CD8-positive, alpha-beta T cell (primary cell): ENCODE measurements at regions of chr16 and their contacts with region 1.

Region 1: DNA sequence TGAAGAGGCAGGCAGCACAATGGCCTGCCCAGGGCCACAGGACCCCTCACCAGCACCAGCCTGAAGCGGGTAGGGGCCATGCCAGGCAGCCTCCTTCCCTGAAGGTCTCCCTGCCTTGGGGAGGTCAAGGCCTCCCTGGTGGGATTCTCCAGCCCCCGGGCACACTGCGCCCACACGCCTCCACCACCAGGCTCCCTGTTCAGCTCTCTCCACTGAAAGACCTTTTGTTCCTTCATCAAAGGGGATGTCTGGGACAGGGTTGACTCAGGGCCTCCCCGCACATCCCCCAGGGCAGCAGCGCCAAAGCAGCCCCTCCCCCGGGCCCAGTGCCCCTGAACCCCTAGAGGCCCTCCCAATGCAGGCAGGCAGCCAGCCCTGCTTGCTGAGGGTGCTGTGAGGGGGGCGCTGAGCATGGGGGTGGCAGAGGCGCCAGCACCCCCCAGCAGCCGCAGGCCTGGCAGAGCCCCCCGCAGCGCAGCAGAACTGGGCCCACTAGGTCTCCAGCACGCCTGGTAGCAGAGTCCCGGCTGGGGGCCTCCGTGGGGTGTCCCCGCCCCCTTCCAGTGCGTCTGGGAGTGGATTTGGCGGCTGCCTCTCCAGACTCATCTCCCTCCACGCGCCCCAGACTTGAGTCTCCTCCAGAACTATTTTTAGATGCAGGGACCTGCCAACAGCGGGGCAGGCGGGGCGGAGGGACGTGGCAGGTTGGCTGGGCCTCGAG is 13.1 kb downstream of the BCAR1 start:
- DNase-seq: no peak
- ATAC-seq: no peak
- H3K4me3 ChIP-seq: no peak overlapping the region
- H3K4me3 Mint-ChIP-seq: no peak overlapping the region
- H3K27ac ChIP-seq: no peak overlapping the region
- H3K27ac Mint-ChIP-seq: no peak overlapping the region
- H3K4me1 ChIP-seq: no peaks in the 10 kb centered on the region
- H3K4me1 Mint-ChIP-seq: peaks cover 2% of the 10 kb centered on the region
- H3K27me3 ChIP-seq: no peaks in the 10 kb centered on the region
- H3K27me3 Mint-ChIP-seq: no peaks in the 10 kb centered on the region
- CTCF ChIP-seq: no peak

Region 2: GRCh38 chr16:75181630-75182029 is 56.7 kb before region 1 on chr16:
- CTCF ChIA-PET with region 1: no interaction called
- POLR2A ChIA-PET with region 1: no interaction called
- intact Hi-C with region 1: no loop called
- DNase-seq: no peak
- ATAC-seq: no peak
- H3K4me3 ChIP-seq: no peak overlapping the region
- H3K4me3 Mint-ChIP-seq: no peak overlapping the region
- H3K27ac ChIP-seq: no peak overlapping the region
- H3K27ac Mint-ChIP-seq: no peak overlapping the region
- H3K4me1 ChIP-seq: no peaks in the 10 kb centered on the region
- H3K4me1 Mint-ChIP-seq: no peaks in the 10 kb centered on the region
- H3K27me3 ChIP-seq: no peaks in the 10 kb centered on the region
- H3K27me3 Mint-ChIP-seq: peaks cover 5% of the 10 kb centered on the region
- CTCF ChIP-seq: no peak

Region 3: DNA sequence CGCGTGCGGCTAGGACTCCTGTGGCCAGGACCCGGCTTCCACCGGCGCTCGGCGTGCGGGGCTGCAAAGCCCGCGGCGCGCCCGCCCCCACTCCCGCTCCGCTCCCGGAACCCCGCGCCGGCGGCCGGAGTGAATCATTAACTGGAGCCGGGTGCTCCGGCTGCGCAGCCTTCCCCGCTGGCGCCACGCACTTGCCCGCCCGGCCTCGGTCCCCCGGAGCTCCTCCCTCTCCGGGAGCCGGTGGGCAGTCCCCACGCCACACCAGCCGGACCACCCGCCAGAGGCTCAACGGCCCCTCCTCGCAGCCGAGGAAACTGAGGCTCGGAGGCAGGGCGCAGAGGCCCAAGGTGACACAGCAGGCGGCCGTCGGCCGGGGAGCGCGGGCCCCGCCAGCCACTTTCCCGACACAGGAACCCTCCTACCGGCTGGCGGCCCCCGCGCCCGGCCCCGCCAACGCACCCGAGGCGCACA is 12.6 kb after region 1 on chr16:
- CTCF ChIA-PET with region 1: interaction called, 14 read pairs
- POLR2A ChIA-PET with region 1: no interaction called
- intact Hi-C with region 1: no loop called
- DNase-seq: no peak
- ATAC-seq: no peak
- H3K4me3 ChIP-seq: no peak overlapping the region
- H3K4me3 Mint-ChIP-seq: no peak overlapping the region
- H3K27ac ChIP-seq: no peak overlapping the region
- H3K27ac Mint-ChIP-seq: no peak overlapping the region
- H3K4me1 ChIP-seq: peaks cover 6% of the 10 kb centered on the region
- H3K4me1 Mint-ChIP-seq: peaks cover 10% of the 10 kb centered on the region
- H3K27me3 ChIP-seq: peaks cover 13 to 24% of the 10 kb centered on the region in 2 experiments
- H3K27me3 Mint-ChIP-seq: peaks cover 44% of the 10 kb centered on the region
- CTCF ChIP-seq: no peak

Region 4: GRCh38 chr16:75385507-75386152 is 147.3 kb after region 1 on chr16:
- CTCF ChIA-PET with region 1: interaction called, 214 read pairs
- POLR2A ChIA-PET with region 1: interaction called, 11 read pairs
- intact Hi-C with region 1: loop called in 1 of 2 experiments (anchors 1 kb)
- DNase-seq: peak in 3 of 9 experiments; percentile 5 to 79 (median 70)
- ATAC-seq: peak; percentile 26
- H3K4me3 ChIP-seq: no peak overlapping the region
- H3K4me3 Mint-ChIP-seq: no peak overlapping the region
- H3K27ac ChIP-seq: no peak overlapping the region
- H3K27ac Mint-ChIP-seq: no peak overlapping the region
- H3K4me1 ChIP-seq: peaks cover 4% of the 10 kb centered on the region
- H3K4me1 Mint-ChIP-seq: peaks cover 16% of the 10 kb centered on the region
- H3K27me3 ChIP-seq: no peaks in the 10 kb centered on the region
- H3K27me3 Mint-ChIP-seq: no peaks in the 10 kb centered on the region
- CTCF ChIP-seq: peak; percentile 75

Region 5: GRCh38 chr16:75392911-75393310 is 154.6 kb after region 1 on chr16:
- CTCF ChIA-PET with region 1: interaction called, 214 read pairs
- POLR2A ChIA-PET with region 1: no interaction called
- intact Hi-C with region 1: no loop called
- DNase-seq: no peak
- ATAC-seq: no peak
- H3K4me3 ChIP-seq: no peak overlapping the region
- H3K4me3 Mint-ChIP-seq: no peak overlapping the region
- H3K27ac ChIP-seq: no peak overlapping the region
- H3K27ac Mint-ChIP-seq: no peak overlapping the region
- H3K4me1 ChIP-seq: no peaks in the 10 kb centered on the region
- H3K4me1 Mint-ChIP-seq: no peaks in the 10 kb centered on the region
- H3K27me3 ChIP-seq: no peaks in the 10 kb centered on the region
- H3K27me3 Mint-ChIP-seq: no peaks in the 10 kb centered on the region
- CTCF ChIP-seq: no peak

Region 6: GRCh38 chr16:75402821-75403475 is 164.7 kb after region 1 on chr16:
- CTCF ChIA-PET with region 1: interaction called, 47 read pairs
- POLR2A ChIA-PET with region 1: no interaction called
- intact Hi-C with region 1: loop called (anchors 1 to 5 kb)
- DNase-seq: peak in 2 of 9 experiments; percentile 41 to 50
- ATAC-seq: peak; percentile 44
- H3K4me3 ChIP-seq: no peak overlapping the region
- H3K4me3 Mint-ChIP-seq: no peak overlapping the region
- H3K27ac ChIP-seq: no peak overlapping the region
- H3K27ac Mint-ChIP-seq: no peak overlapping the region
- H3K4me1 ChIP-seq: no peaks in the 10 kb centered on the region
- H3K4me1 Mint-ChIP-seq: no peaks in the 10 kb centered on the region
- H3K27me3 ChIP-seq: no peaks in the 10 kb centered on the region
- H3K27me3 Mint-ChIP-seq: no peaks in the 10 kb centered on the region
- CTCF ChIP-seq: peak; percentile 61

Region 7: GRCh38 chr16:75764154-75764768 is 526.0 kb after region 1 on chr16:
- CTCF ChIA-PET with region 1: interaction called, 7 read pairs
- POLR2A ChIA-PET with region 1: no interaction called
- intact Hi-C with region 1: loop called (anchors 1 to 2 kb)
- DNase-seq: peak; percentile 24 to 83 (median 53)
- ATAC-seq: peak; percentile 99
- H3K4me3 ChIP-seq: no peak overlapping the region
- H3K4me3 Mint-ChIP-seq: no peak overlapping the region
- H3K27ac ChIP-seq: no peak overlapping the region
- H3K27ac Mint-ChIP-seq: no peak overlapping the region
- H3K4me1 ChIP-seq: no peaks in the 10 kb centered on the region
- H3K4me1 Mint-ChIP-seq: no peaks in the 10 kb centered on the region
- H3K27me3 ChIP-seq: no peaks in the 10 kb centered on the region
- H3K27me3 Mint-ChIP-seq: peaks cover 2% of the 10 kb centered on the region
- CTCF ChIP-seq: peak; percentile 83